ENCODE measurements at regions of chr12 and their contacts with region 1.

Region 1: GRCh38 chr12:70733385-70733784 is 96.2 kb upstream of the PTPRB start:
- DNase-seq: no peak
- ATAC-seq: peak; percentile 58

Region 2: DNA sequence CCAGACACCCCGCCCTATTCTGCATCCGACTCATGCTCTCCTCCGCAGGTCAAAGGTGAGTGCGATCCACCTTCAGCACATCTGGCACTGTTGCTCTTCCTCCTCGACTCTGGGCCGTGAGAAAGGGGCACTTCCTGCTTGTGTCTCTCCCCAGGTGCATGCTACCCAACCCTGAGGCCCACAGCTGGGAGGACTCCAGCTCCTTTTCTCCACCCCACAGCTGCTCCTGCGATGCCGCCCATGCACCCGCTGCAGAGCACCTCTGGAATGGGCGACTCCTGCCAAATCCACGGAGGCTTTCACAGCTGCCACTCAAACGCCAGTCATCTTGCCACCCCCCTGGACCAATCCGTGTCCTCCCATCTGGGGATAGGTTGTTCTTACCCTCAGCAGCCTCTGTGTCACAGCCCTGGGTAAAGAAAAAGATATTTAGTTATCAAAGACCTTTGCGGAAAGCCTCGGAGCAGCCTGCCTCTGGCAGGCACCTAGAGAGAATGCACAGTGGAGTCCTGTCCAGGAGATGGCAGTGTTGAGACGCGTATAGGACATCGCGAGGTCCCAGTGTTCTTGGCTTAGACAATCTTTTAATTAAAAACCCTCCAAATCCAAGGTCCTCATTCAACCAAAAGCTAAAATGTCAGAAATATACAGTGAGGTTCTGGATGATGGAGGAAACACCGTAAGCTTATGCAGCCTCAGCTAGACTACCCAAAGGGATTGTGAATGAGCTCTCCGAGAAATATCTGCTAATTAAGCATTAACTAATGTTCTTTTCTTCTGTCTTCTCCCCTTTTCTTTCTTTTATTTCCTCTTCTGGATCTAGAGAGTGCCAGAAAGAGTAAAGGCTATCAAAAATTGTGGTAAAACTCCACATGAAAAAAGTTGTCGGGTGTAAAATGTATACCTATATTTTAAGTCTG is 854.1 kb before region 1 on chr12:
- intact Hi-C with region 1: loop called in 1 of 2 experiments (anchors 5 kb)
- DNase-seq: peak; percentile 35 to 82
- ATAC-seq: peak; percentile 95

Region 3: DNA sequence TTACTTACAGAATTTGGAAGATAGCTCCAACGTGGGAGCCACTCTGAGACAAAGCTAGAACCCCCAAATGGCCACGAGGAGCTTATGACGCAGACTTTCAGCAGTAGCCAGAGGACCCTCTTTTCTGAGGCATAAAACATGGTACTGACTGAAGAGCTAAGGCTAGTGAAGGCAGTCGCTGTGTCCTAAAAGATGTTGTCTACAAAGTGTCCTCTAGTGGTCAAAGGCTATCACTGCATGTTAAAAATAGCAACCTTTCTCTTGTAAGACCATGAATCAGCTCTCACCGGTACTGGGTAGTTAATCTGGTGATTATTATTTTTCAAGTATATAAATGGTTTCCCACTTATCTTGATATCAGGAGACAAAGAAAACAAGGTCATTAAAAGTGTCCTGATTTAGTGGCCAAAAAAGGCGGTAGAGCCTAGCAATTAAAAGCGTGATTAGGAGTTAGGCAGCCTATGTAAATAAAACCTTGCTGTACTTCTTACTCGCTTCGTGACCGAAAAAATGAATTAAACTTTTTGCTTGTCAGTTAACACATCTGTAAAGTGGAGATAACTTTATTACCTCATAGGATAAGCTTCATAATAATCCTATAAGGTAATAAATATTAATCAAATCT is 659.2 kb after region 1 on chr12:
- intact Hi-C with region 1: loop called in 1 of 2 experiments (anchors 10 kb)
- DNase-seq: no peak
- ATAC-seq: peak; percentile 86

Measured in left colon (tissue), 2 donors.